ENCODE measurements at regions of chr19 and their contacts with region 1.

Region 1: GRCh38 chr19:10251792-10252694 is at the start of gene MRPL4:
- DNase-seq: peak; percentile 96
- ATAC-seq: peak; percentile 98
- H3K4me3 Mint-ChIP-seq: peak within 1 kb of the TSS; percentile 95
- H3K27ac Mint-ChIP-seq: peak within 1 kb of the TSS; percentile 96
- H3K4me1 Mint-ChIP-seq: peaks cover 5% of the 10 kb centered on the region
- H3K27me3 Mint-ChIP-seq: peaks cover 2% of the 10 kb centered on the region; the same call in 1 of the 2 replicates
- CTCF ChIP-seq: no peak
- total RNA-seq, gene MRPL4: 109 to 112 TPM (median 110 TPM) in 3 replicates

Region 2: GRCh38 chr19:10010247-10010691 is 241.8 kb before region 1 on chr19 and contains the start of gene COL5A3:
- CTCF ChIA-PET with region 1: no interaction called
- POLR2A ChIA-PET with region 1: no interaction called
- DNase-seq: peak; percentile 49
- ATAC-seq: peak; percentile 76
- H3K4me3 Mint-ChIP-seq: peak within 1 kb of the TSS; percentile 61
- H3K27ac Mint-ChIP-seq: no peak within 1 kb of the TSS
- H3K4me1 Mint-ChIP-seq: peaks cover 10% of the 10 kb centered on the region
- H3K27me3 Mint-ChIP-seq: peaks cover 63% of the 10 kb centered on the region
- CTCF ChIP-seq: no peak
- total RNA-seq, gene COL5A3: 0.81 to 1.2 TPM (median 0.96 TPM) in 3 replicates

Region 3: GRCh38 chr19:10095948-10096621 is 156.0 kb before region 1 on chr19:
- CTCF ChIA-PET with region 1: interaction called, 10 read pairs
- POLR2A ChIA-PET with region 1: no interaction called
- DNase-seq: peak; percentile 87
- ATAC-seq: peak; percentile 87
- H3K4me3 Mint-ChIP-seq: peak overlapping the region; percentile 42
- H3K27ac Mint-ChIP-seq: no peak overlapping the region
- H3K4me1 Mint-ChIP-seq: peaks cover 2% of the 10 kb centered on the region; the same call in 1 of the 2 replicates
- H3K27me3 Mint-ChIP-seq: peaks cover 62% of the 10 kb centered on the region
- CTCF ChIP-seq: no peak

Region 4: GRCh38 chr19:10183926-10184325 is 68.1 kb before region 1 on chr19:
- CTCF ChIA-PET with region 1: interaction called, 21 read pairs
- POLR2A ChIA-PET with region 1: interaction called, 3 read pairs
- DNase-seq: no peak
- ATAC-seq: no peak
- H3K4me3 Mint-ChIP-seq: no peak overlapping the region
- H3K27ac Mint-ChIP-seq: peak overlapping the region; percentile 37; the same call in 1 of the 2 replicates
- H3K4me1 Mint-ChIP-seq: no peaks in the 10 kb centered on the region
- H3K27me3 Mint-ChIP-seq: no peaks in the 10 kb centered on the region
- CTCF ChIP-seq: no peak

Region 5: GRCh38 chr19:10206226-10206885 is 45.7 kb before region 1 on chr19:
- CTCF ChIA-PET with region 1: interaction called, 11 read pairs
- POLR2A ChIA-PET with region 1: no interaction called
- DNase-seq: no peak
- ATAC-seq: no peak
- H3K4me3 Mint-ChIP-seq: no peak overlapping the region
- H3K27ac Mint-ChIP-seq: no peak overlapping the region
- H3K4me1 Mint-ChIP-seq: peaks cover 15% of the 10 kb centered on the region
- H3K27me3 Mint-ChIP-seq: peaks cover 4% of the 10 kb centered on the region
- CTCF ChIP-seq: no peak

Region 6: DNA sequence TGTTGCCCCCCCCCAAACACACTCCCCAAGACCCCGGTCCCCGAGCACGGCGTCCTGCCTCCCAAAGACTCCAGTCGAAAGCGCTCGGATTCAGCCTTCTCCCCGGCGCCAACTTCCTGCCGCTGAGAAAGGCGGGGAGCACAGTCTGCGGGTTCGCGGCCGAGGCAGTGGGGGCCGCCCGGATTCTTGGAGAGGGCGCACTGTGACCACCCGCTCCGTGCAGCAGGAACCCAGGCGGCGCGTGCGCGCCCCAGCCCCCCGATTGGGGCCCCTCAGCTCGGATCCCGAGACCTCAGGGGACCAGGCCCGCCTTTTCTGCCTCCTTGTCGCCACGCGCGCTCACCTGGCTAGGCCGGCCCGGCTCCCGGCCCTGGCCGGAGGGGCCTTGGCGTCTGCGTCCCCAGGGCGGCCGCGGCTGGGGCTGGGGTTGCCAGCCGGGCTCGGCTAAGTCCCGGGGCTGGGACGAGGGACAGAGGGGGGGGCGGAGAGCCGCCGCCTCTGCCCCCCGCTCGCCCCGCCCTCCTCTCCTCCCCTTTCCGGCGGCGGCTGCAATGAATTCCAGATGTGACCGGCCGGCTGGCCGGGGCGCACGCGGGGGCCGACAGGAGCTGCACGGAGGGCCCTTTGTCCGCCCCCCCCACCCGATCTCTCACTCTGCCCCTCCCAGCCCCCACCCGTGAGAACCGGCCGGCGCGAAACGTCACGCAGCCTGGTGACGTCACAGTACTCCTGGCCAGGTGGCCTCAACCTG is 21.0 kb before region 1 on chr19 and contains the start of gene S1PR2:
- CTCF ChIA-PET with region 1: interaction called, 43 read pairs
- POLR2A ChIA-PET with region 1: no interaction called
- DNase-seq: peak; percentile 86
- ATAC-seq: peak; percentile 72
- H3K4me3 Mint-ChIP-seq: peak within 1 kb of the TSS; percentile 72
- H3K27ac Mint-ChIP-seq: peak within 1 kb of the TSS; percentile 92
- H3K4me1 Mint-ChIP-seq: peaks cover 11% of the 10 kb centered on the region
- H3K27me3 Mint-ChIP-seq: no peaks in the 10 kb centered on the region; the same call in 1 of the 2 replicates
- CTCF ChIP-seq: no peak
- total RNA-seq, gene S1PR2: 12.9 to 13.6 TPM (median 13.2 TPM) in 3 replicates

Measured in WTC11 (cell line).